Activated CD4-positive, alpha-beta memory T cell treated with anti-CD3 and anti-CD28 coated beads, Interleukin-2, amount 10 ng/mL, durations not matched to agents 7 days and 5 days (primary cell): ENCODE measurements at regions of chr9 and their contacts with region 1.

Region 1: GRCh38 chr9:124040935-124041816 is 29.6 kb downstream of the LHX2 start:
- DNase-seq: peak; percentile 50
- H3K4me3 Mint-ChIP-seq: no peak overlapping the region
- H3K27ac Mint-ChIP-seq: no peak overlapping the region
- H3K4me1 Mint-ChIP-seq: peaks cover 9% of the 10 kb centered on the region
- H3K27me3 Mint-ChIP-seq: peaks cover 55% of the 10 kb centered on the region

Region 2: GRCh38 chr9:123544007-123544827 is 497.0 kb before region 1 on chr9:
- CTCF ChIA-PET with region 1: interaction called, 26 read pairs
- POLR2A ChIA-PET with region 1: no interaction called
- DNase-seq: no peak
- H3K4me3 Mint-ChIP-seq: no peak overlapping the region
- H3K27ac Mint-ChIP-seq: no peak overlapping the region
- H3K4me1 Mint-ChIP-seq: no peaks in the 10 kb centered on the region
- H3K27me3 Mint-ChIP-seq: no peaks in the 10 kb centered on the region

Region 3: DNA sequence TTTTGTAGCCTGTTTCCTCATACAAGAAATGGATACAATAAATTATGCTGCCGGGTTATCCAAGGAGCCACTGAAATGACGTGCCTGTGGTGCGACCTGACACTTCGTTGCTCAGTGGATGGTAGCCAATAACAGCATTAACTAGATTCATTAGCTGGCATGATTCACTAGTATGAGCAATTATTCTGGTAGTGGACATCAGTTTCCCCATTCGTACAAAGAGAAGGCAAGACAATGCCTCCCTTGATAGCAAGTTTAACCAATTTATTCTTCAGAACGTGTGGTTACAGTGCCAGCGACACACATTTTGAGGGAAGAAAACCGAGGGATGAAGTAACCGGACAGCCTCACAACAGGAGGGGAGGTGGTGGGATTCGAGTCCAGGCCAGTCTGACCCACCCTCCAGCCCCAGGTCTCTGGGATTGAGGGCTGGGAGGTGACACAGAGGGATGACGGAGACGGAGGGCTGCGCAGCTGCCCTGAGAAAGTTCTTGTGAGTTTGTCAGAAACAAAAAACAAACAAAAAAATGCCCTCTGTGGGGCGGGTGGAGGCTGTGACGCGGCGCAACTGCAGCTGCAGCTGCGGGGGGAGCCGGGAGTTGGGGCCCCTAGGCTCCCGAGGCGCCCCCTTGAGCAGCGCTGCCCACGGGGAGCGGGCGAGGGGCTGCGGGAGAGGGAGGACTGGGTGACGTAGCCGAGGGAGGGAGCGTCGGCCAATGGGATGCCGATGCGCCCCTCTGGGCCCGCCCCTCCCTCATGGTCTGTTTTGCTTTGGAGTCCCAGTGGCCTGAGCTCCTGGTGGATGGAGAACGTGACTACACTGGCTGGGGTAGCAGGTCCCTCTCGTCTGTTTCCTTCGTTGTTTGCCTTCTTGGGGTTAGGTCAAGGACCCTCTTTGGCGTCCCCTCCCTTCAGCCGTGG is 18.7 kb before region 1 on chr9:
- CTCF ChIA-PET with region 1: interaction called, 11 read pairs
- POLR2A ChIA-PET with region 1: no interaction called
- DNase-seq: no peak
- H3K4me3 Mint-ChIP-seq: no peak overlapping the region
- H3K27ac Mint-ChIP-seq: no peak overlapping the region
- H3K4me1 Mint-ChIP-seq: peaks cover 9% of the 10 kb centered on the region
- H3K27me3 Mint-ChIP-seq: peaks cover 70% of the 10 kb centered on the region

Region 4: GRCh38 chr9:124098141-124099090 is 57.2 kb after region 1 on chr9:
- CTCF ChIA-PET with region 1: no interaction called
- POLR2A ChIA-PET with region 1: no interaction called
- DNase-seq: no peak
- H3K4me3 Mint-ChIP-seq: no peak overlapping the region
- H3K27ac Mint-ChIP-seq: no peak overlapping the region
- H3K4me1 Mint-ChIP-seq: peaks cover 12% of the 10 kb centered on the region
- H3K27me3 Mint-ChIP-seq: peaks cover 21% of the 10 kb centered on the region